ENCODE measurements at regions of chr9 and their contacts with region 1.

Region 1: GRCh38 chr9:26744191-26744965 is 148.2 kb downstream of the CAAP1 start:
- DNase-seq: peak; percentile 41
- H3K4me3 ChIP-seq: no peak overlapping the region
- H3K27ac ChIP-seq: no peak overlapping the region
- H3K4me1 ChIP-seq: no peaks in the 10 kb centered on the region
- H3K27me3 ChIP-seq: no peaks in the 10 kb centered on the region; the same call in 1 of the 2 replicates

Region 2: GRCh38 chr9:26612211-26612610 is 132.2 kb before region 1 on chr9:
- in situ Hi-C with region 1: no loop called
- DNase-seq: no peak
- H3K4me3 ChIP-seq: no peak overlapping the region
- H3K27ac ChIP-seq: no peak overlapping the region
- H3K4me1 ChIP-seq: no peaks in the 10 kb centered on the region
- H3K27me3 ChIP-seq: no peaks in the 10 kb centered on the region

Region 3: GRCh38 chr9:26687421-26687820 is 57.0 kb before region 1 on chr9:
- in situ Hi-C with region 1: loop called (anchors 10 kb)
- DNase-seq: no peak
- H3K4me3 ChIP-seq: no peak overlapping the region
- H3K27ac ChIP-seq: no peak overlapping the region
- H3K4me1 ChIP-seq: no peaks in the 10 kb centered on the region
- H3K27me3 ChIP-seq: no peaks in the 10 kb centered on the region

Region 4: GRCh38 chr9:26833792-26834191 is 89.4 kb after region 1 on chr9:
- in situ Hi-C with region 1: no loop called
- DNase-seq: peak; percentile 14
- H3K4me3 ChIP-seq: no peak overlapping the region
- H3K27ac ChIP-seq: no peak overlapping the region
- H3K4me1 ChIP-seq: no peaks in the 10 kb centered on the region
- H3K27me3 ChIP-seq: no peaks in the 10 kb centered on the region

Region 5: GRCh38 chr9:26856413-26857032 is 112.1 kb after region 1 on chr9:
- in situ Hi-C with region 1: loop called (anchors 10 kb)
- DNase-seq: peak; percentile 56
- H3K4me3 ChIP-seq: no peak overlapping the region
- H3K27ac ChIP-seq: no peak overlapping the region
- H3K4me1 ChIP-seq: no peaks in the 10 kb centered on the region
- H3K27me3 ChIP-seq: no peaks in the 10 kb centered on the region